ENCODE measurements at regions of chr2 and their contacts with region 1.

Region 1: GRCh38 chr2:238370823-238371372 is 50.6 kb downstream of the TRAF3IP1 start:
- DNase-seq: peak; percentile 64
- H3K4me3 Mint-ChIP-seq: no peak overlapping the region
- H3K27ac Mint-ChIP-seq: no peak overlapping the region
- H3K4me1 Mint-ChIP-seq: peaks cover 7% of the 10 kb centered on the region
- H3K27me3 Mint-ChIP-seq: peaks cover 2% of the 10 kb centered on the region

Region 2: GRCh38 chr2:238358769-238359168 is 12.1 kb before region 1 on chr2:
- CTCF ChIA-PET with region 1: interaction called, 16 read pairs
- POLR2A ChIA-PET with region 1: no interaction called
- DNase-seq: no peak
- H3K4me3 Mint-ChIP-seq: no peak overlapping the region
- H3K27ac Mint-ChIP-seq: peak overlapping the region; percentile 73
- H3K4me1 Mint-ChIP-seq: peaks cover 39% of the 10 kb centered on the region
- H3K27me3 Mint-ChIP-seq: no peaks in the 10 kb centered on the region

Region 3: GRCh38 chr2:238462782-238463396 is 92.0 kb after region 1 on chr2:
- CTCF ChIA-PET with region 1: interaction called, 23 read pairs
- POLR2A ChIA-PET with region 1: no interaction called
- DNase-seq: no peak
- H3K4me3 Mint-ChIP-seq: no peak overlapping the region
- H3K27ac Mint-ChIP-seq: no peak overlapping the region
- H3K4me1 Mint-ChIP-seq: peaks cover 5% of the 10 kb centered on the region
- H3K27me3 Mint-ChIP-seq: peaks cover 2% of the 10 kb centered on the region